WTC11 (cell line): ENCODE measurements at regions of chr4 and their contacts with region 1.

Region 1: DNA sequence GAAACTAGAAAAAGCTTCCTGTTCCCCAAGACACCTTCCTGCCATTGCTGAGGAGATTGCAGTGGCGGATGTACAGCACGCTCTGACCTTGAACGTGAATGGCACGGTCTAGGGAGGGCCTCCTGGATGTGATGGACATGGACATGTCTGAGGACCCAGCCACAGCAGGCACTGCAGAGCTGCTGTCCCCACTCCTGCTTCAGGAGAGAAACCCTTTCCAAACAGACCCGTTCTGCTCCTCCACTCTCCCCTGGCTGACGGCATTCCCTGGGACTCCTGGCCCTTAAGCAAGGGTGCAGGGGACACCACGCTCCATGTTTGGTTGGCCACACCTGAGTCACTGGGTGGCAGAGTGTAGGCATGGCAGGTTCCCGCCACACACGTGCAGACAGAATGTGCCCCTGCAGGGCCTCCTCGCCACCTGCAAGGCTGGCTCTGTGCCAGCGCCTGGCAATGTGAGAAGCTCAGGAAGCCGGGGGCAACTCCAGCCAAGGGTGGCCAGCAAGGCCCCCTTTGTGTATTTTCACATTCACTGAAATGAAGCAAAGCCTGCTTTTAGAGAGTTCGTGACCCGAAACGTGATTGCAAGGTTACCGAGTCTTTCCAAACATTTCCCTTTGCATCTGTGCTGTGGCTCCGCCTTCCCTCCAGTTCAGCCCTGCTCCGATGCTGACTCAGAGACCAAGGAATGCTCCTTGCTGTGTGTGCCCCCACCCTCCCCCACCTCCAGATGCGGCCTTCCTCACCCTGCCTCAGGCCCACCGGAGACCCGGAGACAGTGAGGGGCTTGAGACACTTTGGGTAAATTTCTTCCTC is 46.1 kb downstream of the HTRA3 start:
- DNase-seq: no peak
- ATAC-seq: peak; percentile 77
- H3K4me3 Mint-ChIP-seq: no peak overlapping the region
- H3K27ac Mint-ChIP-seq: no peak overlapping the region
- H3K4me1 Mint-ChIP-seq: peaks cover 18% of the 10 kb centered on the region
- H3K27me3 Mint-ChIP-seq: peaks cover 3% of the 10 kb centered on the region; the same call in 1 of the 2 replicates
- CTCF ChIP-seq: no peak

Region 2: GRCh38 chr4:8241895-8242696 is 73.5 kb before region 1 on chr4:
- CTCF ChIA-PET with region 1: interaction called, 16 read pairs
- POLR2A ChIA-PET with region 1: no interaction called
- DNase-seq: peak; percentile 95
- ATAC-seq: peak; percentile 89
- H3K4me3 Mint-ChIP-seq: no peak overlapping the region
- H3K27ac Mint-ChIP-seq: no peak overlapping the region
- H3K4me1 Mint-ChIP-seq: no peaks in the 10 kb centered on the region
- H3K27me3 Mint-ChIP-seq: no peaks in the 10 kb centered on the region; the same call in 1 of the 2 replicates
- CTCF ChIP-seq: peak; percentile 96

Region 3: GRCh38 chr4:8330821-8331574 is 15.4 kb after region 1 on chr4:
- CTCF ChIA-PET with region 1: interaction called, 10 read pairs
- POLR2A ChIA-PET with region 1: no interaction called
- DNase-seq: no peak
- ATAC-seq: no peak
- H3K4me3 Mint-ChIP-seq: no peak overlapping the region
- H3K27ac Mint-ChIP-seq: no peak overlapping the region
- H3K4me1 Mint-ChIP-seq: no peaks in the 10 kb centered on the region
- H3K27me3 Mint-ChIP-seq: no peaks in the 10 kb centered on the region
- CTCF ChIP-seq: no peak

Region 4: GRCh38 chr4:8376361-8376760 is 60.7 kb after region 1 on chr4:
- CTCF ChIA-PET with region 1: interaction called, 20 read pairs
- POLR2A ChIA-PET with region 1: no interaction called
- DNase-seq: no peak
- ATAC-seq: no peak
- H3K4me3 Mint-ChIP-seq: no peak overlapping the region
- H3K27ac Mint-ChIP-seq: no peak overlapping the region
- H3K4me1 Mint-ChIP-seq: peaks cover 3% of the 10 kb centered on the region
- H3K27me3 Mint-ChIP-seq: no peaks in the 10 kb centered on the region
- CTCF ChIP-seq: no peak

Region 5: DNA sequence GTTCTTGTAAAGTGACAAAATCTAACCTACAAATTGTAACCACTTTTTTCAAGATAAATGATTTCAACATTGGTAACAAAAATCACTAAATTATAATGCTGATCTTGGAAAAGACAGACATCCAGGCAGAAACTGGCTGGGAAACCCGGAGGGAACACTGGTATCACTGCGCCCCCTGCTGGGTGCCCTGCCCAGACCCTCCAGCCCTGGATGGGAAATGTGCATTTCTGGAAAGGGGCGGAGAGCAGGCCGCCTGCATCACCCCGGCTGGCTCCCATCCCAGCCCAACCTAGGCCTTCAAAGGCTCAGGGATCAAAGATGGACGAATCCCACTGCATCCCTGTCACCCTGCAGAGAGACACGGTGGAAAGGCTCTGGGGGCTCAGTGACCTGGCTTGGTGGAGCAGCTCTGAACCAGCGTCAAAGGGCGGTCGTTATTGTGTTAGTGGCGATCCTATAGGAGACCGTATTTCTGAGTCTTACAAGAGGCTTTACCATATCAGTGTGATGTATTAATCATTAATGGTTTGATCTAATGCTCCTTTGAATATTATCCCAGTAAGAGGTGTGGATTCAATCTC is 87.6 kb after region 1 on chr4:
- CTCF ChIA-PET with region 1: interaction called, 59 read pairs
- POLR2A ChIA-PET with region 1: no interaction called
- DNase-seq: peak; percentile 88
- ATAC-seq: peak; percentile 93
- H3K4me3 Mint-ChIP-seq: no peak overlapping the region
- H3K27ac Mint-ChIP-seq: peak overlapping the region; percentile 86
- H3K4me1 Mint-ChIP-seq: peaks cover 4% of the 10 kb centered on the region; the same call in 1 of the 2 replicates
- H3K27me3 Mint-ChIP-seq: peaks cover 2% of the 10 kb centered on the region; the same call in 1 of the 2 replicates
- CTCF ChIP-seq: peak; percentile 68; the same call in 1 of the 2 replicates

Region 6: GRCh38 chr4:8459867-8460447 is 144.3 kb after region 1 on chr4:
- CTCF ChIA-PET with region 1: no interaction called
- POLR2A ChIA-PET with region 1: no interaction called
- DNase-seq: peak; percentile 30
- ATAC-seq: peak; percentile 79
- H3K4me3 Mint-ChIP-seq: no peak overlapping the region
- H3K27ac Mint-ChIP-seq: no peak overlapping the region
- H3K4me1 Mint-ChIP-seq: peaks cover 5% of the 10 kb centered on the region; the same call in 1 of the 2 replicates
- H3K27me3 Mint-ChIP-seq: no peaks in the 10 kb centered on the region
- CTCF ChIP-seq: no peak